Psoas muscle (tissue), 8 donors: ENCODE measurements at regions of chr17 and their contacts with region 1.

Region 1: GRCh38 chr17:45640141-45640850 is 143.8 kb upstream of the CRHR1 start:
- DNase-seq: peak; percentile 70 to 81
- ATAC-seq: peak; percentile 68 to 88 (median 84)
- H3K4me3 ChIP-seq: no peak overlapping the region
- H3K27ac ChIP-seq: no peak overlapping the region
- H3K4me1 ChIP-seq: no peaks in the 10 kb centered on the region
- H3K27me3 ChIP-seq: no peaks in the 10 kb centered on the region
- CTCF ChIP-seq: peak; percentile 96

Region 2: GRCh38 chr17:45828628-45829027 is 188.3 kb after region 1 on chr17:
- intact Hi-C with region 1: loop called (anchors 1 to 2 kb)
- DNase-seq: no peak
- ATAC-seq: no peak
- H3K4me3 ChIP-seq: no peak overlapping the region
- H3K27ac ChIP-seq: no peak overlapping the region
- H3K4me1 ChIP-seq: no peaks in the 10 kb centered on the region
- H3K27me3 ChIP-seq: peaks cover 0 to 2% (median 0%) of the 10 kb centered on the region in 3 donors
- CTCF ChIP-seq: no peak

Region 3: GRCh38 chr17:45834471-45835396 is 194.4 kb after region 1 on chr17:
- intact Hi-C with region 1: loop called (anchors 1 to 2 kb)
- DNase-seq: no peak
- ATAC-seq: no peak
- H3K4me3 ChIP-seq: no peak overlapping the region
- H3K27ac ChIP-seq: no peak overlapping the region
- H3K4me1 ChIP-seq: no peaks in the 10 kb centered on the region
- H3K27me3 ChIP-seq: no peaks in the 10 kb centered on the region
- CTCF ChIP-seq: no peak

Region 4: GRCh38 chr17:45852535-45853297 is 212.4 kb after region 1 on chr17:
- intact Hi-C with region 1: loop called (anchors 5 kb)
- DNase-seq: peak in 1 of 2 donors; percentile 37
- ATAC-seq: peak in 1 of 4 donors; percentile 35
- H3K4me3 ChIP-seq: no peak overlapping the region
- H3K27ac ChIP-seq: no peak overlapping the region
- H3K4me1 ChIP-seq: peaks cover 5% of the 10 kb centered on the region
- H3K27me3 ChIP-seq: peaks cover 0 to 6% (median 0%) of the 10 kb centered on the region in 3 donors
- CTCF ChIP-seq: peak; percentile 86

Region 5: GRCh38 chr17:46742565-46743270 is 1102.4 kb after region 1 on chr17:
- intact Hi-C with region 1: no loop called
- DNase-seq: no peak
- ATAC-seq: peak; percentile 43 to 76 (median 60)
- H3K4me3 ChIP-seq: no peak overlapping the region
- H3K27ac ChIP-seq: no peak overlapping the region
- H3K4me1 ChIP-seq: no peaks in the 10 kb centered on the region
- H3K27me3 ChIP-seq: no peaks in the 10 kb centered on the region
- CTCF ChIP-seq: no peak